ENCODE measurements at regions of chr20 and their contacts with region 1.

Region 1: DNA sequence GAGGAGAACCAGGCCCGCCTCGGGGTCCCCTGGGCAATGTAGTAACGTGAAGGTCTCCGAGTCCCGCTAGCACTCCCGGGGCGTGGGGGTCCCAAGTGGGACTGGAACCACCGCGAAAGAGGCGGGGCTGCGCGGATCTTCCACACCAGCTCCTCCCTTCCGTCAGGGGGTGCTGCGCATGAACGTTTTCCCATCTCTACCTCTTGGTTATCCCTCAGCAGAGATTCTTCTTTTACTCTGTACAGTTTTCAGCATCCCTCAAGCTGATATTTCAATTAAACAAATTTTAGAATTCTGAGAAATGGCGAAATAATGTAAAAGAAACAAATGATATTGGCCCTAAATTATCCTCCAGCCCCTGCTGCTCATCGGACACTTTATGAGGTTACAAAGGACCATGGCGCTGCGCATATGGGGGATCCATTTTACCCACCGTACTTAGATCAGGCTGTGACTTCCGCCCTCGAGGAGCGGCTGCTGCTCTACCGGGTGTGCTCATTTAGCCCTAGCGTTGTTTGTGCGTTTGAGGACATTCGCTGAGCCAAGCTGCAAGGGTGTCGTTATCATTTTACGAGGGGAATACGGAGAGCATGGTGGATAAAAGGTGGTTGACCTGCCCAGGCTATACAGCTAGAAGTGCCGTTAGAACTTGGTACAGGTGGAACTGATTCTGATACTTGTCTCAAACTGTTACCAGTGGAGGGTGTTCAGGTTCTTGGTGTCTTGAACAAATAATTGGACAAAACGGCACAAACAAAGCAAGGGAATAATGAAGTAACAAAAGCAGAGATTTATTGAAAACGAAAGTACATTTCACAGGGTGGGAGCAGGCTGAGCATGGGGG is 75.2 kb upstream of the CHD6 start:
- DNase-seq: peak; percentile 67 to 93 (median 76)
- ATAC-seq: peak; percentile 86
- H3K4me3 ChIP-seq: peak overlapping the region; percentile 83
- H3K4me3 Mint-ChIP-seq: peak overlapping the region; percentile 90
- H3K27ac ChIP-seq: peak overlapping the region; percentile 76 to 87
- H3K27ac Mint-ChIP-seq: peak overlapping the region; percentile 87
- H3K4me1 ChIP-seq: peaks cover 14% of the 10 kb centered on the region
- H3K4me1 Mint-ChIP-seq: peaks cover 27% of the 10 kb centered on the region
- H3K27me3 ChIP-seq: peaks cover 0 to 3% of the 10 kb centered on the region in 2 experiments
- H3K27me3 Mint-ChIP-seq: peaks cover 5% of the 10 kb centered on the region
- CTCF ChIP-seq: peak; percentile 53

Region 2: DNA sequence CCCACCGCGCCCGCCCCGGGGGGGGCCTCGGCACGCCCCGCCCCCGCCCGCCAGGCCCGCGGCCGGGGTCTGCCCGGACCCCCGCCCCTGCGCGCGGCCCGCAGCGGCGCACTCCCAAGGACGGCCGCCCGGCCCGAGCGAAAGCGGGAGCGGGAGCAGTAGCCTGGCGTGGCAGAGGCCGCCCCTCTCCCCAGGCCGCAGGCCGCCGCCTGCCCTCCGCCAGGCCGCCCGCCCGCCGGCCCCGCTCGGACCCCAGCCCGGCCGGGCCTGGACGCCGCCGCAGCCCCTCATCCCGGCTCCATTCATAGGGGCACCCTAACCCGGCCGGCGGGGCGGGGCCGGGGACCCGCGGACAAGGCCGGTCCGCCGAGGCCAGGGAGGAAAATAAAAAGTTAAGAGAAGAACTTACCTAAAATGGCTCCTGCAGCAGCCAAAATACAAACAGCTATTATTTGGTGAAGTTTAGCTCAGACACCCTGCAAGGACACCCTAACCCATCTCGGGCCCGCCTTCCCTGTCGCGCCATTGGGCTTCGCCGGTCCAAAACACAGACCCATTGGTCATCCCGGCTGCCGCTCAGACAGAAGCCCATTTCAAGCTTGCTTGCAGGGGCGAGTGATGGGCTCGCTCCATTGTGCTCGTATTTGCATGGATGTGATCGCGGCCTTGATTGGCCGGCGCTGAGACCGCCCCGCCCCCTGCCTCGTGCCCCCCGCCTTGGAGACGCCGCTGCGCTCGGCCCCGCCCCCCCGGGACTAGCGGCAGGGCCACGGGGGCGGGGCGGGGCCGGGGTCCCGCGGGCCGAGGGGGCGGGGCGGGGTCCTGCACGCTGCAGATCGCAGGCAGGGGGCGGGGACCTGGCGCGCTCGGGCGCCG is 75.2 kb before region 1 on chr20 and contains the start of gene CHD6:
- CTCF ChIA-PET with region 1: interaction called, 4 read pairs
- POLR2A ChIA-PET with region 1: interaction called, 78 read pairs
- intact Hi-C with region 1: loop called (anchors 2 to 5 kb)
- DNase-seq: peak; percentile 98 to 100 (median 99)
- ATAC-seq: peak; percentile 96
- H3K4me3 ChIP-seq: peak within 1 kb of the TSS; percentile 75
- H3K4me3 Mint-ChIP-seq: peak within 1 kb of the TSS; percentile 99
- H3K27ac ChIP-seq: peak within 1 kb of the TSS; percentile 10 to 53
- H3K27ac Mint-ChIP-seq: peak within 1 kb of the TSS; percentile 93
- H3K4me1 ChIP-seq: peaks cover 19% of the 10 kb centered on the region
- H3K4me1 Mint-ChIP-seq: peaks cover 55% of the 10 kb centered on the region
- H3K27me3 ChIP-seq: no peaks in the 10 kb centered on the region
- H3K27me3 Mint-ChIP-seq: no peaks in the 10 kb centered on the region
- CTCF ChIP-seq: no peak
- total RNA-seq, gene CHD6: 114 to 126 TPM

Region 3: DNA sequence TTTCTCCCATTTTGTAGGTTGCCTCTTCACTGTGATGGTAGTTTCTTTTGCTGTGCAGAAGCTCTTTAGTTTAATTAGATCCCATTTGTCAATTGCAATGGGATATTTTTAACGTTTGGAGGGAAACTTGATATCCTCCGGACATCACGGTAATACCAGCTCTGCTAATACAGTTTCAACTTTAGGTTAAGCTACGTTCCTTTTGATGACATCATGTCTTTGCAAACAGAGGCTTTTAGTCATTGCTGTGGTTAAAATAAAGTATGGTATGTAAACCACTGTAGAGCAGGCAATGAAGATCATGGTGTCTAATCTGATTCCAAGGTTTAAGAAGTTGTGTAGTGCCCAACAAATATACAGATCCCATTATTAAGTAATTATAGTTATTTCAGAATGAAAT is 92.8 kb after region 1 on chr20:
- CTCF ChIA-PET with region 1: no interaction called
- POLR2A ChIA-PET with region 1: no interaction called
- intact Hi-C with region 1: no loop called
- DNase-seq: no peak
- ATAC-seq: no peak
- H3K4me3 ChIP-seq: no peak overlapping the region
- H3K4me3 Mint-ChIP-seq: no peak overlapping the region
- H3K27ac ChIP-seq: no peak overlapping the region
- H3K27ac Mint-ChIP-seq: no peak overlapping the region
- H3K4me1 ChIP-seq: no peaks in the 10 kb centered on the region
- H3K4me1 Mint-ChIP-seq: no peaks in the 10 kb centered on the region
- H3K27me3 ChIP-seq: peaks cover 0 to 6% of the 10 kb centered on the region in 2 experiments
- H3K27me3 Mint-ChIP-seq: peaks cover 29% of the 10 kb centered on the region
- CTCF ChIP-seq: no peak

Region 4: DNA sequence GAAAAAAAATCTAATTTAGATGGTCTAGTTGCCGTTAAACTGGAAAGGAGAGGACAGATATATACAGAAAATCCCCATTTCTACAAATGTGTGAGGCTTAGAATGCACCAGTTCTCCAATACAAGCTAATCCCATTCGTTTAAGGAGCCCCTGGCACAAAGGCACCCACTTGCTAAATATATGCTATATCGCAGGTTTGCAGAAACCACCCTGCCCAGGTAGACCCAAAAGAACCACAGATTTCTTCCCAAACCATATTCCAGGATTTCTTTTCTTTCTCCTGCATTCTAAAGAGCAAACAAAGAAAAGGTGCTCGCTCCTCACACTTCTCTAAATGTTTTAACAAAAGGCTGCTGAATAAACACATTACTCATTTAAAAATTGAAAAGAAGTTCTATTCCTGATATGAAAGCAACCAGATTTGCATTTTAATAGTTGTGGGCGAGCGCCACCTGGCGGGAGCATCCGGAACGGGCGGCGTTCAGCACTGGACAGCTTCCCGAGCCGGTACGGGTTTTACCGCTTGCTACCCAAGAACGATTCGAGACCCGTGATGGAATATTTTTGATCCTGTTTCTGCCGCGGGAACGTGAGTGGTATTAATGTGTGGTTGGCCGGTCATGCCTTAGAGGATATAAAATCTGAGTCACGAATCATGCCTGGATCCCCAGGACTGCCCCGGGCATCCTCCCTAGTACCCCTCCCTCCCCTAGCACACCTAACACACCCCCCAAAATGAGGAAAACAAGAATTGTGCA is 1494.3 kb after region 1 on chr20:
- CTCF ChIA-PET with region 1: no interaction called
- POLR2A ChIA-PET with region 1: no interaction called
- intact Hi-C with region 1: loop called in 1 of 2 experiments (anchors 10 kb)
- DNase-seq: peak; percentile 4 to 60 (median 32)
- ATAC-seq: no peak
- H3K4me3 ChIP-seq: no peak overlapping the region
- H3K4me3 Mint-ChIP-seq: no peak overlapping the region
- H3K27ac ChIP-seq: no peak overlapping the region
- H3K27ac Mint-ChIP-seq: no peak overlapping the region
- H3K4me1 ChIP-seq: peaks cover 8% of the 10 kb centered on the region
- H3K4me1 Mint-ChIP-seq: peaks cover 11% of the 10 kb centered on the region
- H3K27me3 ChIP-seq: peaks cover 24 to 31% of the 10 kb centered on the region in 2 experiments
- H3K27me3 Mint-ChIP-seq: peaks cover 64% of the 10 kb centered on the region
- CTCF ChIP-seq: peak; percentile 77

Measured in CD4-positive, alpha-beta T cell (primary cell).